Breast epithelium (tissue), 4 donors: ENCODE measurements at regions of chr13 and their contacts with region 1.

Region 1: DNA sequence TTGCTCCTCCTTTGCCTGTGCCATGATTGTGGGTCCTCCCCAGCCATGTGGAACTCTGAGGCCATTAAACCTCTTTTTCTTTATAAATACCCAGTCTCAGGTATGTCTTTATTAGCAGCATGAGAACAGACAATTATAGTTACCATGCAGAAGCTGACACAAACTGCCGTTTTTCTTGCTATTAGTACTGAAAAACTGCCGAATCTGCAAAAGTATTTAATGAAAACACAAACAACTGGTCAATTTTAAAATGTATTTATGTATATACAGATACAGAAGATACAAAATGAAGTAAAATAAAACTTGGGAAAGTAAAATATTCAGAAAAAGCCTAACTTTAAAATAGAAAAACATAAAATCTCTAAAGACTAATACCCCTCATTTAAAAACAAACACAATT is 206.3 kb downstream of the DIAPH3 start:
- DNase-seq: no peak
- H3K4me3 ChIP-seq: no peak overlapping the region
- H3K27ac ChIP-seq: no peak overlapping the region
- H3K4me1 ChIP-seq: no peaks in the 10 kb centered on the region
- H3K27me3 ChIP-seq: no peaks in the 10 kb centered on the region
- CTCF ChIP-seq: no peak
- POLR2A ChIP-seq: no peak

Region 2: DNA sequence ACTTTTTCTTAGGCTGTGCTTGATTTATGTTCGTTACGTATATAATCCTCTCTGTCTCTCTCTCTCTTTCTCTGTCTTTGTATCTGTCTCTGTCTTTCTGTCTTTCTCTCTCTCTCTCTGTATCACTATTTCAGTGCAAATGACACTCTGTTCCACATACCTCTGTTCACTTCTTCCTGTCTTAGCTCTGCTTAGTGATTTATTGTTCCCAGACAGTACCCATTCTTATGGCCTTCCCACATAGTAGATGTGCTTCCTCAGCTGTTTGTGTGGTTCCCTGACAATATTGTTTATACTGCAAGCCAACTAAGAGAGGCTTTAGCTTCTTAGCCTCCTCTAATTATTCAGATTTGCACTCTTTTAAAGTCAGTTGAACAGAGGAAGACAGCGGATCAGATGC is 1037.9 kb before region 1 on chr13:
- intact Hi-C with region 1: loop called (anchors 5 kb)
- DNase-seq: no peak
- H3K4me3 ChIP-seq: no peak overlapping the region
- H3K27ac ChIP-seq: no peak overlapping the region
- H3K4me1 ChIP-seq: no peaks in the 10 kb centered on the region
- H3K27me3 ChIP-seq: no peaks in the 10 kb centered on the region
- CTCF ChIP-seq: no peak
- POLR2A ChIP-seq: no peak

Region 3: DNA sequence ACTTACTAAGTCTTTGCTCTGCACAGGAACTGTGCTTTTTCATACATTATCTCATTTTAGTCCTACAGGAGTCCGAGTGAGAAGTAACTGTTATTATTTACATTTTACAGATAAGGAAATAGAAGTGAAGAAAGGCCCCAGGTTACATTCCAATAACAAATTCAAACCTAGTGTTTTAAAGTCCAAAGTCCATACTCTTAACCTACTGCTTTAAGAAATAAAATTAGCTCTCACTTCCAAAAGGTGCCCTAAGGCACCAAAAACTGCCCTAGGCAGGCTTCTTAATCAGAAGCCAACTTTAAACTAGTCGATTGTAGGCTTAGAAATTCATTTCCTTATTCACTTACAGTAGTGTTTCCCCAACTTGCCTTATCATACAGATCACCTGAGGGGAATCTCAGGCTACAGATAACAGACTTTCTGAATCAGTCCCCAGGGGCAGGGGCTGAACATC is 349.6 kb before region 1 on chr13:
- intact Hi-C with region 1: no loop called
- DNase-seq: no peak
- H3K4me3 ChIP-seq: no peak overlapping the region
- H3K27ac ChIP-seq: no peak overlapping the region
- H3K4me1 ChIP-seq: no peaks in the 10 kb centered on the region
- H3K27me3 ChIP-seq: no peaks in the 10 kb centered on the region
- CTCF ChIP-seq: no peak
- POLR2A ChIP-seq: no peak

Region 4: GRCh38 chr13:59970847-59971246 is 13.4 kb after region 1 on chr13:
- intact Hi-C with region 1: no loop called
- DNase-seq: no peak
- H3K4me3 ChIP-seq: no peak overlapping the region
- H3K27ac ChIP-seq: no peak overlapping the region
- H3K4me1 ChIP-seq: no peaks in the 10 kb centered on the region
- H3K27me3 ChIP-seq: no peaks in the 10 kb centered on the region
- CTCF ChIP-seq: no peak
- POLR2A ChIP-seq: no peak